SK-N-SH (cell line): ENCODE measurements at regions of chr17 and their contacts with region 1.

Region 1: DNA sequence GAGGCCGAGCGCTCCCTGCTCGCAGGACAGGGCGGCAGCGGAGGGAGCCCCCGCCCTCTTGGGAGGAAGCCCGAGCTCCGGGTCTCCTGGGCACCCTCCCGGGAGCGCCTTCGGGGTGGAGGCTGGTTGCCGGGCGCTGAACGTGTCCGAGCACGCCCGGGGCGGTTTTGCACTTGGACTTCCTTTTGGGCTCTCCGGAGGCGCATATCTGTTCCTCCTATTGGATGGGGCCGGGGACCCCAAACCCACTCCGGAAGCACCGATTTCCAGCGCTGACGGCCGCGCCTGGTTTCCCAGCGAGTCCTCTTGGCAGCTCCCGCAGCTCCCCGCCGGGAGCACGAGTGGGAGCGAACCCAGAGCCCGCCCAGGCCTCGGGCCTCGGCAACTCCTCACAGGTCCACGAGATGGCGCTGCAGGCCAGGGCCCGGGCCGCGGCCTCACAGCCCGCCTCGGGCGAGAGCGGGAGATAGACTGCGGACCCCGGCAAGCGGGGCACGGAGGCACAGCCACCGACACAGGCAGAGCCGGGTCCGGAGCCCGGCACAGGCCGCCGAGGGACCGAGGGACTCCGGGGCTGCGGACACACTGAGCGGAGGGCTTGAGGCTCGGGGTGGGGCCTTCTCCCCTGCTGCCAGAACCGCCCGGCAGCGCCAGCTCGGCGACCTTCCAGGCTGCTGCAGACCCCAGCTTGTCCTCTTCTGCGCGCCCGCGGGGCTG is 12.7 kb downstream of the TBX2 start:
- DNase-seq: peak; percentile 99
- H3K4me3 ChIP-seq: peak overlapping the region; percentile 77 to 82
- H3K27ac ChIP-seq: peak overlapping the region; percentile 80 to 90
- H3K4me1 ChIP-seq: peaks cover 5 to 51% of the 10 kb centered on the region in 2 experiments; a peak in 2 of 4 replicates
- H3K27me3 ChIP-seq: no peaks in the 10 kb centered on the region
- CTCF ChIP-seq: peak; percentile 98
- EP300 ChIP-seq: no peak; a peak in 1 of 4 replicates
- RAD21 ChIP-seq: peak; percentile 96

Region 2: GRCh38 chr17:61002316-61002736 is 410.0 kb before region 1 on chr17:
- CTCF ChIA-PET with region 1: interaction called, 24 read pairs
- POLR2A ChIA-PET with region 1: no interaction called
- DNase-seq: peak; percentile 55
- H3K4me3 ChIP-seq: no peak overlapping the region
- H3K27ac ChIP-seq: peak overlapping the region; percentile 46 to 78; a peak in 3 of 4 replicates
- H3K4me1 ChIP-seq: peaks cover 3 to 7% of the 10 kb centered on the region in 2 experiments; a peak in 1 of 4 replicates
- H3K27me3 ChIP-seq: no peaks in the 10 kb centered on the region
- CTCF ChIP-seq: peak; percentile 92
- EP300 ChIP-seq: peak; percentile 52 to 64; a peak in 2 of 4 replicates
- RAD21 ChIP-seq: peak; percentile 98

Region 3: DNA sequence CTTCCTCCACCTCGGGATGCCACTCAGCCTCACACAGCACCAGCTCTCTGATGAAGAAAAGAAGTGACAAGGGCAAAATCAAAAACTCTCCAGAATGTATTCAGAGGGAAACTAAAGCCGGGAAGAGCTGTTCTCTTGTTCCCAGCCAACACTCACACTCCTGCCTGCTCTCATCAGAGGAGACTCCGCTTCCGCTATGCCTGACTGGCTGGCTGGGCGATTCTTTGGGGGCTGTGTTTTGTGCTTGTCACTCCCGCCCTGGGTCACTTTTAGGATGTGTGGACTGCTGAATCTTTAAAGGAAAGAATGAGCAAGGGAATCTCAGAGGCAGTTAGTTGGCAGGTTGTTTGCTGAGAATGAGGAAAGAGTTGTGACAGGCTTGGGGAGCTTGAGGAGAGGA is 67.2 kb before region 1 on chr17:
- CTCF ChIA-PET with region 1: no interaction called
- POLR2A ChIA-PET with region 1: no interaction called
- DNase-seq: no peak
- H3K4me3 ChIP-seq: no peak overlapping the region
- H3K27ac ChIP-seq: no peak overlapping the region
- H3K4me1 ChIP-seq: peaks cover 0 to 3% of the 10 kb centered on the region in 2 experiments; a peak in 1 of 4 replicates
- H3K27me3 ChIP-seq: no peaks in the 10 kb centered on the region
- CTCF ChIP-seq: no peak
- EP300 ChIP-seq: no peak
- RAD21 ChIP-seq: no peak

Region 4: GRCh38 chr17:61389670-61390478 is 22.4 kb before region 1 on chr17:
- CTCF ChIA-PET with region 1: interaction called, 18 read pairs
- POLR2A ChIA-PET with region 1: interaction called, 3 read pairs
- DNase-seq: peak; percentile 80
- H3K4me3 ChIP-seq: peak overlapping the region in 1 of 2 experiments; percentile 30; a peak in 1 of 4 replicates
- H3K27ac ChIP-seq: no peak overlapping the region; a peak in 1 of 4 replicates
- H3K4me1 ChIP-seq: peaks cover 5 to 89% of the 10 kb centered on the region in 2 experiments; a peak in 2 of 4 replicates
- H3K27me3 ChIP-seq: no peaks in the 10 kb centered on the region
- CTCF ChIP-seq: peak; percentile 87
- EP300 ChIP-seq: no peak
- RAD21 ChIP-seq: peak; percentile 58

Region 5: GRCh38 chr17:61467416-61468259 is 55.3 kb after region 1 on chr17:
- CTCF ChIA-PET with region 1: interaction called, 11 read pairs
- POLR2A ChIA-PET with region 1: no interaction called
- DNase-seq: peak; percentile 76
- H3K4me3 ChIP-seq: no peak overlapping the region
- H3K27ac ChIP-seq: peak overlapping the region in 1 of 2 experiments; percentile 51; a peak in 1 of 4 replicates
- H3K4me1 ChIP-seq: peaks cover 0 to 24% of the 10 kb centered on the region in 2 experiments; a peak in 1 of 4 replicates
- H3K27me3 ChIP-seq: no peaks in the 10 kb centered on the region
- CTCF ChIP-seq: no peak
- EP300 ChIP-seq: no peak
- RAD21 ChIP-seq: no peak

Region 6: DNA sequence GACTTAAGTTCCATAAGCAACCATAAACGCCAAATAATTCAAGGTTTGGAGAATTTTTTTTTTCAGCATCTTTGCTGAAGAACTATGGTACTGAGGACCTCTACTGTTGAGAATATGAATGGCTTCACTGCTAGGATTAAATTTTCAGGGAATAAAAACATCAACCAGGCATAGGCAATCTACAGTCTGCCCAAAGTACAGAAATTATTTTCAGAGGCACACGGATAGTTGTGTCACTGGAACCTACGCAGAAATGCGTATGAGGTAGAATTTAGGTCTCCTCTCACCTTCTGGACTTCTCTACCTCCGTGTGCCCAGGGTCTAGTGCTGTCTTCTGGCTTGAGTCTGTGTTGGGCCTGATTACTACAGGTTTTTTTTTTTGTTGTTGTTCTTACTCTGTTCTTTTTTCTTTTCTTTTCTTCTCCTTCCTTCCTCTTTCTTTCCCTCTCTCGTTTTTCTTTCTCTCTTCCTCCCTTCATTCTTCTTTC is 139.0 kb after region 1 on chr17:
- CTCF ChIA-PET with region 1: interaction called, 111 read pairs
- POLR2A ChIA-PET with region 1: interaction called, 4 read pairs
- DNase-seq: peak; percentile 75
- H3K4me3 ChIP-seq: no peak overlapping the region; a peak in 1 of 4 replicates
- H3K27ac ChIP-seq: no peak overlapping the region; a peak in 1 of 4 replicates
- H3K4me1 ChIP-seq: peaks cover 10 to 16% of the 10 kb centered on the region in 2 experiments; a peak in 3 of 4 replicates
- H3K27me3 ChIP-seq: no peaks in the 10 kb centered on the region
- CTCF ChIP-seq: peak; percentile 98
- EP300 ChIP-seq: no peak; a peak in 1 of 4 replicates
- RAD21 ChIP-seq: peak; percentile 97

Region 7: GRCh38 chr17:61837175-61838051 is 425.1 kb after region 1 on chr17:
- CTCF ChIA-PET with region 1: interaction called, 34 read pairs
- POLR2A ChIA-PET with region 1: no interaction called
- DNase-seq: peak; percentile 59
- H3K4me3 ChIP-seq: no peak overlapping the region
- H3K27ac ChIP-seq: no peak overlapping the region; a peak in 1 of 4 replicates
- H3K4me1 ChIP-seq: peaks cover 0 to 3% of the 10 kb centered on the region in 2 experiments; a peak in 2 of 4 replicates
- H3K27me3 ChIP-seq: no peaks in the 10 kb centered on the region
- CTCF ChIP-seq: peak; percentile 95
- EP300 ChIP-seq: no peak
- RAD21 ChIP-seq: peak; percentile 97